ENCODE measurements at regions of chr2 and their contacts with region 1.

Region 1: GRCh38 chr2:85988175-85988913 is 99.6 kb upstream of the ST3GAL5 start:
- DNase-seq: no peak
- H3K4me3 ChIP-seq: no peak overlapping the region
- H3K4me3 Mint-ChIP-seq: no peak overlapping the region
- H3K27ac Mint-ChIP-seq: no peak overlapping the region
- H3K4me1 ChIP-seq: no peaks in the 10 kb centered on the region
- H3K4me1 Mint-ChIP-seq: no peaks in the 10 kb centered on the region
- H3K27me3 ChIP-seq: no peaks in the 10 kb centered on the region
- H3K27me3 Mint-ChIP-seq: no peaks in the 10 kb centered on the region
- CTCF ChIP-seq: no peak

Region 2: GRCh38 chr2:85935746-85936208 is 52.6 kb before region 1 on chr2:
- CTCF ChIA-PET with region 1: no interaction called
- POLR2A ChIA-PET with region 1: no interaction called
- intact Hi-C with region 1: loop called (anchors 5 kb)
- DNase-seq: peak; percentile 22 to 63
- H3K4me3 ChIP-seq: no peak overlapping the region
- H3K4me3 Mint-ChIP-seq: no peak overlapping the region
- H3K27ac Mint-ChIP-seq: peak overlapping the region; percentile 75
- H3K4me1 ChIP-seq: peaks cover 36% of the 10 kb centered on the region
- H3K4me1 Mint-ChIP-seq: peaks cover 19% of the 10 kb centered on the region
- H3K27me3 ChIP-seq: no peaks in the 10 kb centered on the region
- H3K27me3 Mint-ChIP-seq: no peaks in the 10 kb centered on the region
- CTCF ChIP-seq: no peak

Region 3: GRCh38 chr2:86225581-86225980 is 237.2 kb after region 1 on chr2:
- CTCF ChIA-PET with region 1: no interaction called
- POLR2A ChIA-PET with region 1: no interaction called
- intact Hi-C with region 1: no loop called
- DNase-seq: no peak
- H3K4me3 ChIP-seq: no peak overlapping the region
- H3K4me3 Mint-ChIP-seq: no peak overlapping the region
- H3K27ac Mint-ChIP-seq: no peak overlapping the region
- H3K4me1 ChIP-seq: no peaks in the 10 kb centered on the region
- H3K4me1 Mint-ChIP-seq: peaks cover 21% of the 10 kb centered on the region
- H3K27me3 ChIP-seq: no peaks in the 10 kb centered on the region
- H3K27me3 Mint-ChIP-seq: no peaks in the 10 kb centered on the region
- CTCF ChIP-seq: no peak

Region 4: GRCh38 chr2:86649119-86649947 is 661.0 kb after region 1 on chr2:
- CTCF ChIA-PET with region 1: no interaction called
- POLR2A ChIA-PET with region 1: no interaction called
- intact Hi-C with region 1: no loop called
- DNase-seq: no peak
- H3K4me3 ChIP-seq: no peak overlapping the region
- H3K4me3 Mint-ChIP-seq: no peak overlapping the region
- H3K27ac Mint-ChIP-seq: no peak overlapping the region
- H3K4me1 ChIP-seq: no peaks in the 10 kb centered on the region
- H3K4me1 Mint-ChIP-seq: no peaks in the 10 kb centered on the region
- H3K27me3 ChIP-seq: no peaks in the 10 kb centered on the region
- H3K27me3 Mint-ChIP-seq: no peaks in the 10 kb centered on the region
- CTCF ChIP-seq: no peak